PC-9 (cell line): ENCODE measurements at regions of chr7 and their contacts with region 1.

Region 1: DNA sequence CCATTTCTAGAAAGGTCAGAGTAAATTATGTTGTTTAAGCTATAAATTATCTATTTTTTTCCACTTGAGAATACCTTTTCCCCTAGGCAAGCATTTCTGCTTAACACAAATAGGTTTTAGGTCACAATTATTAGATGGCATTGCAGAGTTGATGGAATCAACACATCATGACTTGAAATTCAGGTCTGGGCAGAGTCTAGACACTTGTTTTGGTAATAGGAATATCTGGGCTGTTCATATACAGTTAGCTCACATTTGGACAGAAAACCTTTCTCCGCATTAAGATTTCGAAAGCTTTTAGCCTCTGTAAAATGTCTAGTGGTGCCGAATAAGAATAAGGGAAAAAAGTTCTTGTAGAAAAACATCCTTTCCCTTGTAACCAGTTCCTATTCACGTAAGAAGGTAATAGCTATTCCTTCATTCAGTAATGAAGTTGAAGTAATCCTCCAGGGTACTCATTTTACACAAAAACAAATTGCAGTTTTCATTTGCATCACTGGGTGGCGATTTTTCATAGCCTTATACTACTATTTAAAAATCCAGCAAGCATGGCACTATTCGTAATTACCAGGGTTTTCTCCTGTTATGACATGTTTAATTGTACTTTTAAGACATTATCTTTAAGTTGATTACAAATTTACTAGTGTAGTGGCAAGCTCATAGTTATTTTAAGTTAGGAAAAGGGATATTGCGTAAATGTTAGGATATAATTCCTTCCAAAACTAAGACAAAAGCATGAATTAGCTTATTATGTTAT is 37.0 kb downstream of the RPA3 start:
- DNase-seq: peak; percentile 29 to 82
- H3K4me3 ChIP-seq: peak overlapping the region; percentile 11; the same call in 1 of the 2 replicates
- H3K27ac ChIP-seq: peak overlapping the region; percentile 38
- H3K4me1 ChIP-seq: peaks cover 28% of the 10 kb centered on the region
- H3K27me3 ChIP-seq: no peaks in the 10 kb centered on the region
- CTCF ChIP-seq: peak; percentile 84

Region 2: DNA sequence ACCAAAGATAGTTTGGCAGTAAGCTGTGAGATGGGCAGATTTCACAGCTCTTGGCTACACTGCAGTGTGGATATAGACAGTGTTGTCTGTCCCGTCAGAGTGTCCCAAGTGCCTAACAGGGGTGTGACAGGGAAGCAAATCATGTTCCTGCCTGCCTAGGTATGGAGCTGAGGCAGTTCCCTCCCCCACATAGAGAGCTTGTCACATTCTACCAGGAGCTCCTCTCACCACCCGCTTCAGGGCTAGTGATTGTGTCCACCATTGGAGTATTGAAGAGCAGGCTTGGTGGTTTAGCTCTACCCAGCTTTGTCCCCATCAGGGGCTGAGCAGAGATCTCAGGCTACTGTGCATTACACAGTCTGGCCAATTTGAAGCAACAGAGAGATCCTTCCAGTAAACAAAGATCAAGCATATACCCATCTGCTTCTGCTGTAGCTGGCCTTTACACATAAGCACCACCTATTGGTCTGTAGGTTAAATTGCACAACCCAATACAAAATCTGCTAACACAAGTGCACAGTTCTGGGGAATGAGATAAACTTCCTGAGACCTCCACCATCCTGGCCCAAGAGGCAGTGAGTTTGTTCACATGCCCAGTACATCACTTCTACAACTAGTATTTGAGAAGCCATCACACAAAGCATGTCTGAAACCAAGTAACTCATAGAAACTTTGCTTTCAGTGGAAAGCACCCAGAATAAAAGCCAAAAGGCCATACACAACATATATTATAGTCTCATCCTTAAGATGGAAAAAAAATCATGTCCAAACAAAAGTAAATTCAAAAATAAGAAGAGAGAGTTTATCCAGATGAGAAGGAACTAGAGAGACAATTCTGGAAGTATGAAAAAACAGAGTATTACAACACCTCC is 354.5 kb after region 1 on chr7:
- CTCF ChIA-PET with region 1: interaction called, 6 read pairs
- POLR2A ChIA-PET with region 1: interaction called, 5 read pairs
- intact Hi-C with region 1: loop called (anchors 2 kb)
- DNase-seq: no peak
- H3K4me3 ChIP-seq: no peak overlapping the region
- H3K27ac ChIP-seq: no peak overlapping the region
- H3K4me1 ChIP-seq: no peaks in the 10 kb centered on the region
- H3K27me3 ChIP-seq: no peaks in the 10 kb centered on the region
- CTCF ChIP-seq: peak; percentile 69

Region 3: DNA sequence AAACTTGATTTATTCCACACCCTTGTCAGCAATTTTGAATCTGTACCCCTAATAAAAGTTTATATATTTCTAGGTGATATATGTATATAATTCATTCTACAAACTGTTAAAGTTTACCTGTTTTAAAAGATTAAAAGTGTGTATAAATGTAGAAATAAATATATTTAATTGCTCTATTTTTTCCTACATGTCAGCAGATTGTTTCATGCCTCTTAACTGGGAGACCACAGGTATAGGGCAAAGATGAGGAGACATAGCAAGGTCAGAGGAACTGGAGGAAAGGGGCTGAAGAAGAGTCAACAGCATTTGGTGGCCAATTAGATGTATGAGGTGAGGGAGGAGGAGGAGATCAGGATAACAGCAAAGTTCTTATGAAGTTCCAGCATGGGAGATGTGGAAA is 397.1 kb after region 1 on chr7:
- CTCF ChIA-PET with region 1: no interaction called
- POLR2A ChIA-PET with region 1: no interaction called
- intact Hi-C with region 1: loop called (anchors 5 kb)
- DNase-seq: no peak
- H3K4me3 ChIP-seq: no peak overlapping the region
- H3K27ac ChIP-seq: no peak overlapping the region
- H3K4me1 ChIP-seq: no peaks in the 10 kb centered on the region
- H3K27me3 ChIP-seq: no peaks in the 10 kb centered on the region
- CTCF ChIP-seq: no peak

Region 4: GRCh38 chr7:8190119-8190895 is 508.9 kb after region 1 on chr7:
- CTCF ChIA-PET with region 1: no interaction called
- POLR2A ChIA-PET with region 1: no interaction called
- intact Hi-C with region 1: loop called (anchors 2 kb)
- DNase-seq: peak; percentile 34 to 41
- H3K4me3 ChIP-seq: no peak overlapping the region
- H3K27ac ChIP-seq: no peak overlapping the region
- H3K4me1 ChIP-seq: no peaks in the 10 kb centered on the region
- H3K27me3 ChIP-seq: no peaks in the 10 kb centered on the region
- CTCF ChIP-seq: peak; percentile 77